ENCODE measurements at regions of chr5 and their contacts with region 1.

Region 1: DNA sequence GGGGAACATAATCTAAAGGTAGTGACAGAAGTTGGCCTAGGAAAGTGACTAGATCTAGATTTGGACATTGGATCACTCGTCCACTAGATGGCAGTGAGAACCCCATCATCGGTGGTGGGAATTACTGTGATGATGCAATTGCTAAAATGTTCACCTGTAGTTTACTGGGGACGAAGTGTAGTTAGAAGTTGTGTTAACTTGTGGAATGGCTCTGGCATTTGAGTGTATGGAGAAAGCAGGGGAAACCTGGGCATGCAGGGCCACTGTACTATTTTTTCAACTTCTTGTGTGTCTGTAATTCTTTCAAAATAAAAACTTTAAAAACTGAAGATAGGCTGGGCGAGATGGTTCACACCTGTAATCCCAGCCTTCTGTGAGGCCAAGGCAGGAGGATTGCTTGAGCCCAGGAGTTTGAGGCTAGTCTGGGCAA is 75.5 kb downstream of the PHAX start:
- DNase-seq: peak in 6 of 10 donors; percentile 22 to 87 (median 54)

Region 2: GRCh38 chr5:126780165-126780827 is 104.1 kb after region 1 on chr5:
- intact Hi-C with region 1: loop called (anchors 1 kb)
- DNase-seq: peak in 4 of 10 donors; percentile 13 to 50 (median 28)

Region 3: GRCh38 chr5:126927429-126927828 is 251.2 kb after region 1 on chr5:
- intact Hi-C with region 1: no loop called
- DNase-seq: no peak

Region 4: DNA sequence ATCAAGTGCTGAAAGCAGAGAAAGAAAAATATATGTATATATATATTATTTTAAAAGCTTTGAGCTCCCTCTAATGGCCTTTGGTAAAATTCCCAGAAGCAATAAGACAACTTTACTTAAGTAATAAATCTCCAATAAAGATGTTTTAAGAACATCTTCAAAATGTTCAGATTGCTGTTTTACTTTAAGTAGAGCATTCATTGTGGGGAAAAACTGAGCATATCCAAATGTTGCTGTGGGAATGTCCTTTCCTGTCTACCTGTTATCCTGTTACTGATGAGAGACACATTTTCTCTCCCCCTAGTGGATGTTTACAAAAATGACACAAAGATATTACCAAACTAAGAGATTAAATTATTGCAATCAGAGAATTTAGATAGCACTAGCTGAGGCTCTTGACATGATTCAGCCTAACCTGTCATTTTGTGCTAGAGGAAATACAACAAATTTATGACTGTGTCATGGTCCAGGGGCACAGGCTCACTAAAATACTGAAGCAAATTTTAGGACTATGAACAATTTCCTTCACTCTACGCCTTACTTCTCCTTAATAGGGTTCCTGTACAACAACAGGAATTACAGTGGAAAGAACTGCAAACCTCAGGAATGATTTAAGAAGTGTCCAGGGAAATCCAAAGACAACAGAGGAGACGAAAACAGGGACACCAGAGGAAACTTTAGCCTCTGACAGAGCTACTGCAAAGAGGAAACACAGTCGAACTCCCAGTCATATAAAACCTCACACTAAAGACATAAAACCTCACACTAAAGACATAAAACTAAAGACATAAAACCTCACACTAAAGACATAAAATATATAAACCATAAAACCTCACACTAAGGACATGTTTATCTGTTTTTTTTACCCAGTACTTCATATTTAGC is 816.9 kb after region 1 on chr5:
- intact Hi-C with region 1: loop called (anchors 10 kb)
- DNase-seq: no peak

Measured in posterior cingulate gyrus (tissue), 11 donors.